Sciatic nerve (tissue), 2 donors: ENCODE measurements at regions of chr3 and their contacts with region 1.

Region 1: DNA sequence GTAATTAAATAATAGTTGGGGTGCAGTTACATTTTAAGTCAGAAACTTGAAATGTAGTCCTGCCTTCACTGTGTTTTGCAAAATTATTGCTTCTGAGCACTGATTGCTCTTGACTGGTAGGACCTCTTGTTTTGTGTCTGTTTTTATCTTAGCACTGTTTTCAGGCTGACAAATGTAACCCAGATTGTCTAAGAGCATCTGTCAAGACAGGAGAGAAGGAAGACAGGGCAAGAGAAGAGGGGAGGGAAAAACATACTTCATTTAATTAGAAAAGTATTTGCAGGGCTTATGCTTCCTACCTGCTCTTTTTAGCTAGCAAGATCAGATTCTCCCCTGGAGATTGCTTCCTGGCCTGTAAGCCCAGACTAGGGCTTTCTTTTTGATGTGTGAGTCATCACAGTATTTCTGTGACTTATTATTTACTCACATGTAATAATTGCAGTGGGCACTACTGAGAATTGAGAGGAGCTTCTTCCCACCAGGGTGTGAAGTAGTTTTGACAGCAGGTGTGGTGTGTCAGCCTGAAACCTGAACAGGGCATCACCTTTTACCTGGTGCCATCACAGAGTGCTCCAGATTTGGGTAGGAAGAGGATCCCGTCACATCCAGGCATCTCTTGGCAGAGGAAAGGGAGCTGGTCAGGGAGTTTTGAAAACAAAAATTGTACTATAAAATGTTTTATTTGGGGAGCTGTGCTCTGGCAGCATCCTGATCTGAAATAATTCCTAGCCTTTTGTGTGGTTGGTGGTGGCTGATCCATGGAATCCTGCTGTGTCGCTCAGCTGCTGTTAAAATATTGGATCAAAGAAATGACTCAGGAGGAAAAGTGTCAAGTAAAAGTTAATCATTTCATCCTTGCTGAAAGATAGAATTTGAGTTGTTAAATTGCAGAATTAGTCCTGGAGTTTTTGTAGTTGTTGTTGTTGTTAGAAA is 98.2 kb downstream of the TMEM108 start:
- DNase-seq: no peak
- ATAC-seq: no peak

Region 2: GRCh38 chr3:133113526-133113925 is 22.9 kb before region 1 on chr3:
- intact Hi-C with region 1: loop called (anchors 1 kb)
- DNase-seq: no peak
- ATAC-seq: no peak